HEK293 (cell line): ENCODE measurements at regions of chr12 and their contacts with region 1.

Region 1: GRCh38 chr12:7142056-7142644 is 12.0 kb downstream of the CLSTN3 start:
- H3K4me3 ChIP-seq: no peak overlapping the region
- H3K27ac ChIP-seq: no peak overlapping the region
- H3K4me1 ChIP-seq: no peaks in the 10 kb centered on the region
- CTCF ChIP-seq: no peak; the same call in 1 of the 2 replicates

Region 2: GRCh38 chr12:6267139-6267721 is 874.9 kb before region 1 on chr12:
- CTCF ChIA-PET with region 1: no interaction called
- POLR2A ChIA-PET with region 1: interaction called, 12 read pairs
- H3K4me3 ChIP-seq: no peak overlapping the region
- H3K27ac ChIP-seq: no peak overlapping the region
- H3K4me1 ChIP-seq: peaks cover 6% of the 10 kb centered on the region
- CTCF ChIP-seq: no peak

Region 3: GRCh38 chr12:7155481-7156034 is 13.4 kb after region 1 on chr12:
- CTCF ChIA-PET with region 1: interaction called, 43 read pairs
- POLR2A ChIA-PET with region 1: no interaction called
- H3K4me3 ChIP-seq: no peak overlapping the region
- H3K27ac ChIP-seq: no peak overlapping the region
- H3K4me1 ChIP-seq: no peaks in the 10 kb centered on the region; the same call in 1 of the 2 replicates
- CTCF ChIP-seq: no peak

Region 4: GRCh38 chr12:7162691-7163114 is 20.6 kb after region 1 on chr12:
- CTCF ChIA-PET with region 1: interaction called, 43 read pairs
- POLR2A ChIA-PET with region 1: no interaction called
- H3K4me3 ChIP-seq: no peak overlapping the region
- H3K27ac ChIP-seq: no peak overlapping the region
- H3K4me1 ChIP-seq: no peaks in the 10 kb centered on the region
- CTCF ChIP-seq: peak; percentile 46; the same call in 1 of the 2 replicates

Region 5: DNA sequence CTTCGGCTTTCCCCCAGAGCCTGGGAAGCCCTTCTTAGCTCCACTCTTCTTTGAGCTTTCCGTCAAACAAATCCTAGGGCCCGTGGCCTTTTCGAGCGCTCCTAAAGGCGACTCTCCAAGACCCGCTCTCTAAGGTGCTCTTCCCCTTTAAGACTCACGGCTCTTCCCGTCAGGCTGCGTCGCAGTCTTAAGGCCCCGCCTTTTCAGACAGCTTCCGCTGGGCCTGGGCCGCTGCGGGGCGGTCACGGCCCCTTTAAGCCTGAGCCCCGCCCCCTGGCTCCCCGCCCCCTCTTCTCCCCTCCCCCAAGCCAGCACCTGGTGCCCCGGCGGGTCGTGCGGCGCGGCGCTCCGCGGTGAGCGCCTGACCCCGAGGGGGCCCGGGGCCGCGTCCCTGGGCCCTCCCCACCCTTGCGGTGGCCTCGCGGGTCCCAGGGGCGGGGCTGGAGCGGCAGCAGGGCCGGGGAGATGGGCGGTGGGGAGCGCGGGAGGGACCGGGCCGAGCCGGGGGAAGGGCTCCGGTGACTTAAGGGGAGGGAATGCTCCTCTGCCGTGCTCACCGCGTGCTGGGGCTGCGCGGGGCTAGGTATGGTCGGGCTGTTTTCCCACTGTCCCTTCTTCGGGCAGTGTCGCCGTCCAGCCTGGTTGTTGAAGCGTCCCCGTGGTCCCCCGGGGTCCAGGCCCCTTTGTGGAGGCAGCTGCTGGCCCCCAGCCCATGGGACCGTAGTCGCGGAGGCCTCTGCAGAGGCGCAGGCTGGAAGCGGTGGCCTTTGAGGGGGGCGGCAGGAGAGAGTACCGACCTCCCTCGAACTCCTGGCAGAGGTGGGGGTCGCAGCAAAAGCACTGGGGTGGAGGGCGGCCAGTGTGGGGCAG is 47.5 kb after region 1 on chr12 and contains the start of gene PEX5:
- CTCF ChIA-PET with region 1: interaction called, 27 read pairs
- POLR2A ChIA-PET with region 1: no interaction called
- H3K4me3 ChIP-seq: peak within 1 kb of the TSS; percentile 76
- H3K27ac ChIP-seq: peak within 1 kb of the TSS; percentile 67; the same call in 1 of the 2 replicates
- H3K4me1 ChIP-seq: peaks cover 19% of the 10 kb centered on the region
- CTCF ChIP-seq: no peak